ENCODE measurements at regions of chr5 and their contacts with region 1.

Region 1: GRCh38 chr5:32174011-32174870 is at the start of gene GOLPH3:
- DNase-seq: peak; percentile 95 to 98 (median 96)
- ATAC-seq: peak; percentile 90 to 97 (median 96)
- H3K4me3 ChIP-seq: peak within 1 kb of the TSS; percentile 60 to 99 (median 96)
- H3K27ac ChIP-seq: peak within 1 kb of the TSS; percentile 95 to 100 (median 100)
- H3K4me1 ChIP-seq: peaks cover 0 to 46% (median 28%) of the 10 kb centered on the region in 12 donors
- H3K27me3 ChIP-seq: no peaks in the 10 kb centered on the region
- CTCF ChIP-seq: peak in 3 of 12 donors; percentile 11 to 18 (median 17)
- POLR2A ChIP-seq: peak; percentile 46 to 91
- total RNA-seq, gene GOLPH3: 34.4 to 73.4 (median 50.1) TPM

Region 2: GRCh38 chr5:32109236-32109635 is 65.0 kb before region 1 on chr5:
- intact Hi-C with region 1: loop called in 4 of 10 experiments (anchors 5 kb)
- DNase-seq: no peak
- ATAC-seq: no peak
- H3K4me3 ChIP-seq: no peak overlapping the region
- H3K27ac ChIP-seq: no peak overlapping the region
- H3K4me1 ChIP-seq: peaks cover 0 to 7% (median 0%) of the 10 kb centered on the region in 12 donors
- H3K27me3 ChIP-seq: no peaks in the 10 kb centered on the region
- CTCF ChIP-seq: no peak
- POLR2A ChIP-seq: no peak

Region 3: DNA sequence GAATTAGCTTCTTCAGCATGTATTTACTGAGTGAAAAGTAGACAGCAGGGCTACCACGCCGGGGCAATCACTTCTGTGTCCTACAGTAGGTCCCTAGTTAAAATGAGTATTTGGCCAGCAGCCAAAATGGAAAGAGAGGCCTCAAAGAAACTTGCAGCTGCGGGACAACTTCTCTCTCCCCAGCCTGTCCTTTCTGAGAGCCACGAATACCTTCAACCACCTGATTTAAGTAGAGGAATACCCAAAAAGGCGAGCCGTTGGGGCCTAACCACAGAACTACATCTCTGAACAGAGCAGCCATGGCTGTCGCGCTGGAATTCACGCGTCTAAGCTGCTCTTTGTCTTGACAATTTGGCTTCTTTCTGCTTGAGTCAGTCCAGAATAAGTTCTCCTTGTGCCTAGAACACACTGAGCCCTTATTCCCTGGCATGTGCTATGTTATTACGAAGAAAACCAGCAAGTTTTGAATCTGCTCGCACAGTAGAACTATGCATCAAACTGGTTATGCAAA is 43.7 kb after region 1 on chr5:
- intact Hi-C with region 1: loop called in 1 of 10 experiments (anchors 5 kb)
- DNase-seq: peak in 3 of 5 donors; percentile 35 to 49 (median 39)
- ATAC-seq: peak; percentile 49 to 67 (median 60)
- H3K4me3 ChIP-seq: peak overlapping the region in 1 of 12 donors; percentile 3
- H3K27ac ChIP-seq: peak overlapping the region in 5 of 12 donors; percentile 12 to 79 (median 53)
- H3K4me1 ChIP-seq: peaks cover 0 to 15% (median 4%) of the 10 kb centered on the region in 12 donors
- H3K27me3 ChIP-seq: no peaks in the 10 kb centered on the region
- CTCF ChIP-seq: no peak
- POLR2A ChIP-seq: no peak

Region 4: GRCh38 chr5:32232441-32233219 is 58.4 kb after region 1 on chr5:
- intact Hi-C with region 1: loop called in 2 of 10 experiments (anchors 2 to 5 kb)
- DNase-seq: peak; percentile 73 to 80 (median 75)
- ATAC-seq: peak; percentile 84 to 90 (median 86)
- H3K4me3 ChIP-seq: no peak overlapping the region
- H3K27ac ChIP-seq: peak overlapping the region in 8 of 12 donors; percentile 8 to 72 (median 28)
- H3K4me1 ChIP-seq: peaks cover 0 to 38% (median 22%) of the 10 kb centered on the region in 12 donors
- H3K27me3 ChIP-seq: no peaks in the 10 kb centered on the region
- CTCF ChIP-seq: peak; percentile 69 to 88 (median 81)
- POLR2A ChIP-seq: no peak

Region 5: GRCh38 chr5:32244017-32244416 is 69.8 kb after region 1 on chr5:
- intact Hi-C with region 1: no loop called
- DNase-seq: no peak
- ATAC-seq: no peak
- H3K4me3 ChIP-seq: no peak overlapping the region
- H3K27ac ChIP-seq: no peak overlapping the region
- H3K4me1 ChIP-seq: no peaks in the 10 kb centered on the region
- H3K27me3 ChIP-seq: no peaks in the 10 kb centered on the region
- CTCF ChIP-seq: no peak
- POLR2A ChIP-seq: no peak

Region 6: DNA sequence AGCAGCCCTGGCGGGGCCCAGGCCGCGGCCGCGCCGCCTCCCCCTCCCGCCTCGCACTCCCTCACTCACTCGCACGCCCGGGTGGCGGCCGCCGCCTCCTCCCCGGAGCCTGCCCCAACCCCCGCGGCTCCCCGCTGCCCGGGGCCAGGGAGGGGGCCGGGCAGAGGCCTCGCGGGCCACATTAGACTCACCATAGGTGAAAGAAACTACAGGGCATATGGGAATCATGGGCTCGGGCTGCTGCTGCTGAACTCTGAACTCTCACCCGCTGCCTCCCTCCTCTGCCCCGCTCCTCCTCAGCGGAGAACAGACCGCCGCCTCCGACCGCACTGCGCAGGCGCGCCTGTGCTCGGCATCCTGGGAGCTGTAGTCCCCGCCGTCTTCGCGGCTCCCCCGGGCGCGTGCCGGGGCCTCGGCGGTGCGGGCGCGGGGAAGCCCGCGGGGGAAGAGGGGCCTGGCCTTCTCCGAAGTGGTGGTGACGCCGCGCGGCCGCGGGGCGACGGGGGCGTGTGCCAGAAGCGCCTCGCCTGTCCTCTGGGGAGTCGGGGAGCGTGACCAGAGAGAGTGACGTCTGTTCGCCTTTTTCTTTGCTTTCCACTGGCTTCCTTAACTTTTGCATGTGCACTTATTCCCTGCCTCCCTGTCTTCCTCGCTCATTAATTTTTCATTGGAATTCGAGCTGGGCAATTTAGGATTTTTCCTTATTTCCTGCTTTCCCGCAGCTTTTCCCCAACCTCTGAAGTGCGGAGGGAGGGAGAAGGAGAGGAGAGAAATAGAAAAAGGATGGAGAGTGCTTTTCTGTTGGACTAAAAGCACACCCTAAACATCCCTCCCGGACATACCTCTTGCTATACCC is 270.4 kb after region 1 on chr5 and contains the start of gene ZFR:
- intact Hi-C with region 1: no loop called
- DNase-seq: peak; percentile 92 to 97 (median 94)
- ATAC-seq: peak; percentile 96 to 98 (median 97)
- H3K4me3 ChIP-seq: peak within 1 kb of the TSS; percentile 69 to 98 (median 88)
- H3K27ac ChIP-seq: peak within 1 kb of the TSS; percentile 84 to 98 (median 94)
- H3K4me1 ChIP-seq: peaks cover 0 to 47% (median 20%) of the 10 kb centered on the region in 12 donors
- H3K27me3 ChIP-seq: no peaks in the 10 kb centered on the region
- CTCF ChIP-seq: no peak
- POLR2A ChIP-seq: peak; percentile 24 to 69
- total RNA-seq, gene ZFR: 53.7 to 79.9 (median 63.8) TPM